ENCODE measurements at regions of chr11 and their contacts with region 1.

Region 1: GRCh38 chr11:60420015-60420414 is 9.4 kb upstream of the MS4A5 start:
- DNase-seq: no peak
- H3K4me3 ChIP-seq: no peak overlapping the region
- H3K4me3 Mint-ChIP-seq: no peak overlapping the region
- H3K27ac ChIP-seq: no peak overlapping the region
- H3K27ac Mint-ChIP-seq: no peak overlapping the region
- H3K4me1 ChIP-seq: no peaks in the 10 kb centered on the region
- H3K4me1 Mint-ChIP-seq: peaks cover 8% of the 10 kb centered on the region
- H3K27me3 ChIP-seq: no peaks in the 10 kb centered on the region
- H3K27me3 Mint-ChIP-seq: peaks cover 0 to 3% (median 0%) of the 10 kb centered on the region in 3 donors
- CTCF ChIP-seq: no peak

Region 2: DNA sequence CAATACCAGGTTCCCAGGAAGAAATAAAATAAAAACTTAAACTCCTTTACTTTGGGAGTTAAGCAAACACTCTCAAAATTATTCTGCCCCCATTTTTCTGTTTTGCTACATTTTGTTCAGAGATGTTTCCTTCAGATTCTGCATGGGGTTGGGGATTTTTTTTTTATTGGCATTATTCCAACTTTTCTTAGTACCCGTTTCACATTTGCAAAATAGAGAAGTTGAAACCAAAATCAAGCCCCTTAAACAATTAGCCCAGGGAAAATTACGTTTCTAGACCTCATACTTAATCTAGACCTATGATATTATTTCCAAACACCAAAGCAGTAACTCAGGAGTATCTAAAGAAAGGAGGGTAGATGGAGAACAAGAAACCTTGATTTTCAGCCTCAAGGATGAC is 62.2 kb before region 1 on chr11:
- intact Hi-C with region 1: loop called in 1 of 2 experiments (anchors 2 kb)
- DNase-seq: peak in 2 of 3 donors; percentile 42 to 53
- H3K4me3 ChIP-seq: no peak overlapping the region
- H3K4me3 Mint-ChIP-seq: peak overlapping the region in 1 of 2 donors; percentile 12
- H3K27ac ChIP-seq: no peak overlapping the region
- H3K27ac Mint-ChIP-seq: peak overlapping the region in 2 of 7 donors; percentile 27 to 56
- H3K4me1 ChIP-seq: peaks cover 19 to 25% of the 10 kb centered on the region in 2 donors
- H3K4me1 Mint-ChIP-seq: peaks cover 22% of the 10 kb centered on the region
- H3K27me3 ChIP-seq: no peaks in the 10 kb centered on the region
- H3K27me3 Mint-ChIP-seq: peaks cover 0 to 2% (median 0%) of the 10 kb centered on the region in 3 donors
- CTCF ChIP-seq: no peak

Measured in CD14-positive monocyte (primary cell).